Left ventricle myocardium superior (tissue), 1 donor: ENCODE measurements at regions of chr14 and their contacts with region 1.

Region 1: DNA sequence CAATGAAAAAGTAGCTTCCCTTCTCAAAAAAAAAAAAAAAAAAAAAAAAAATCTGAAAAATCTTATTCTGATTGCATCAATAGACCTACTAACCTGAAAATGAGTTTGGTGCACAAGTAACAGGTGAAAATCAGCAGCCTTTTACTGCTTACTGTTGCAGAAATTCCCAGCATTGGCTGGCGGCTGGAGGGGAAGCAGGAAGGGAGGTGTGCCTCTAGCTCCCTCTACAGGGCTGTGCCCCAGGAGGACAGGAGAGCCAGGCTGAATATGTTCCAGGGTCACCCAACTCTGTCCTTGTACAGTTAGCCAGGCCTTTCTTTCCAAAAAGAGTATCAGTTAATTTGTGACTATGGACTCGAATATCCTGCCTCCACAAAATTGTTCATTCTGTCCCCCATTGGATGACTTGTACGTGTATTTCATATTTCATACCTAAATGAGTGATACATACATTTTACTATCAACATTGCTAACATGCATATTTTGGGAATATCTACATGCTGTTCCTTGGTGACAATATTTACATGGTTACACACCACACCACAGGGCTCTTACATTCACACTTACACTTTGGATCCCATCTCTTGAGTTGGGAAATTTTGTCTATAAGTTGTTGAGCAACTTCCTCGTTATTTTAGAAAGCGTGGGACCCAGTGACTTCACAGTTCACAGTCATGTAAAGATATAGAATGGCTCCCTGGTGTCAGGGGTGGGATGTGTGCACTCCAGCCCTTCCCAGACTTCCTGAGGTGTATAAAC is 124.8 kb downstream of the SAMD4A start:
- DNase-seq: peak; percentile 84
- ATAC-seq: peak; percentile 75

Region 2: DNA sequence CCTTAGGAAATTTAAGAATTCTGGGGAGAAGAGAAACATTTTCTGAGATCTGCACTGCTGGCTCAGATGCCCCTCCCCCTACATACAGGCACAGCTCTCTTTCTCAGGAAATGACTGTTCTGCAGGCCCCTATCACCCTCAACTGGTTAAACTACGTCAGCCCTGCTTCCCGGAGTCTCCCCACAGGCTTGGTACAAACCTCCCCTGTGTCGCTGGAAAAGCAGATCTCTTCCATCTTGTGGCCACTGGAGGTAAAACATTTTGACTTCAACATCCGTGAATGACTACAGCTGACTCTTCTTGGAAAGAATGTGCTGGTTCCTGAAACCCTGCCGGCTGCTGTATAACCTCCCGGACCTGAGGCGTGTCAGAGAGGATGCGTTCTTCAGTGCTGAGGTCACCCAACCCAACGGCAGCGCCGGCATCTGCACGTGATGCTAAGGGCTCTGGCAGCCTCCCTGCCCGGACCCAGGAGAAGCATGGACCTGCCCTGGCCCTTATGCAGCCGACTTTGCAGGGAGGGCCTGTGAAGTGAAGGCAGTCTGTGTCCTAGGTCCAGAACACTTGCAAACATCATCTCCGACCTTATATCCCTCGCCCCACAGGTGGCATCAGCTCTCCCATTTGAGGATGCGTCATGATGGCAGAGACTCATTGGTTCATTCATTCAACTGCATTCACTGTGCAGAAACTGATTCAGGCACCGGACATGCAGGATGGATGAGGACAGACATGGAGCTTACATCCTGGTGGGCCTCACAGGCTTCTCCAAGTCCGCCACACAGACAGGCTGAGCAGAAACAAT is 81.7 kb after region 1 on chr14:
- intact Hi-C with region 1: loop called (anchors 5 kb)
- DNase-seq: peak; percentile 85
- ATAC-seq: peak; percentile 77